ENCODE measurements at regions of chr1 and their contacts with region 1.

Region 1: DNA sequence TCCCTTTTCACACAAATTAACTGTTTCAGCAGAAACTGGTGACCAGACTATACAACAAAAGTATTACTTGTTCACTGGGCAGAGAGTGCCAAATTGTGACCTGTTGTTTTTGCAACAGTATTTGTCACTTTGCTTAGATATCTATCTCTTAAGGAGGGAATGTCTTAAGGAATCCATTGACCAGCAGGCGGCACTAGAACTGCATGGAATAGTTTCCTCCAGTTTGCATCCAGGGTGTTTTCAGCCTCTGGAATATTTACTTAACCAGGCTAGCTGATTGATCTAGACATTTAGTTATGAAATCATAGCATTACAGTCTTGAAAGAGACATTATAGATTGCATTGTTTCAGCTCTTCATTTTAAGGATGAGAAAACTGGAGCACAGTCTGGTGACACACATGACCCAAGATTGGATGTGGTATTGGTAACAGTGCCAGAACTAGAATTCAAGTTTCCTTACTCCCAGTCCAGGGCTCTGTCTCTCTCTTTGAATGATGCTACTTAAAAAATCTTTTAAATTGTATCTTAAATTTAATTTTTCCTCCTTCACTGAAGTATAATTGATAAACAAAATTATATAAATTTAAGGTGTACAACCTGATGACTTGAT is 16.9 kb downstream of the RPTN start:
- DNase-seq: peak; percentile 45
- ATAC-seq: peak; percentile 50; the same call in 2 of the 3 replicates
- H3K4me3 ChIP-seq: no peak overlapping the region
- H3K27ac ChIP-seq: no peak overlapping the region
- H3K4me1 ChIP-seq: no peaks in the 10 kb centered on the region
- H3K27me3 ChIP-seq: no peaks in the 10 kb centered on the region
- CTCF ChIP-seq: peak; percentile 68
- EP300 ChIP-seq: no peak
- POLR2A ChIP-seq: no peak
- RAD21 ChIP-seq: no peak

Region 2: GRCh38 chr1:151867785-151868411 is 274.2 kb before region 1 on chr1:
- CTCF ChIA-PET with region 1: no interaction called
- POLR2A ChIA-PET with region 1: no interaction called
- in situ Hi-C with region 1: no loop called
- intact Hi-C with region 1: no loop called
- DNase-seq: no peak
- ATAC-seq: no peak
- H3K4me3 ChIP-seq: no peak overlapping the region
- H3K27ac ChIP-seq: no peak overlapping the region
- H3K4me1 ChIP-seq: no peaks in the 10 kb centered on the region
- H3K27me3 ChIP-seq: no peaks in the 10 kb centered on the region
- CTCF ChIP-seq: no peak
- EP300 ChIP-seq: no peak
- POLR2A ChIP-seq: no peak
- RAD21 ChIP-seq: no peak

Region 3: DNA sequence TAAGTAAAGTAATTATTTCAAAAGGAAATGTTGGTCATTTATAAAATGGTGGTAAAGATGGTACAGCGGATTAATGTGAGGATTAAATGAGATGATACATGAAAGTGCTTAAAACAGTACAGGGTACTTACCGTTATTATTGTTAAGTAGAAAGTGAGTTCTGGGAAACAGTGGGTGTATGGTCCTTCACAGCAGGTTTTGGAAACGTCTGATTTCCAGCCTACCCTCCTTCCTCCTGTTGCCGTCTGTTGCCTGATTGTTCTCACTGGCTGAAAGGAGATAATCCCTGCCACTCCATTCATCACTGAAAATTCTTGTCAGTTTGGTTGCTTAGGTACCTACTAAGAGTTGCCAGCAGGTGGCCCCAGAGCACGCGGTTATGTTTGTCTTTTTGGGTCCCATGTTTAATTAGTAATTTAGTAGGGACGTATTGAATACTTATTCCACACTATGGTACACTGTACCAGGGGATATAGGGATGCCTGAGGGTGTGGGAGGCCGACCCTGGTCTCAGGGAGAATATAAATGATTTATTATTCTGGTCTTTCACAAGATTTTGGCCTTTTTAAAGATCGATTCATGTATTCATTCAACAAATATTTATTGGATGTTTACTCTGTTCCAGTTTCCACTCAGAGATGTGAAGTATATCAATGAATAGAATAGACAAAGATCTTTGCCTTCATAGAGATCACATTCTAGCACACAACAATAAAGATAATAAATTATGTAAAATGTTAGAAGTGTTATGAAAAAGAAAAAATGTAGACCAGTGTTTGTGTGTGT is 47.8 kb after region 1 on chr1:
- CTCF ChIA-PET with region 1: interaction called, 48 read pairs
- POLR2A ChIA-PET with region 1: no interaction called
- in situ Hi-C with region 1: loop called (anchors 5 kb)
- intact Hi-C with region 1: loop called (anchors 1 kb)
- DNase-seq: peak; percentile 31
- ATAC-seq: peak; percentile 68
- H3K4me3 ChIP-seq: no peak overlapping the region
- H3K27ac ChIP-seq: no peak overlapping the region
- H3K4me1 ChIP-seq: no peaks in the 10 kb centered on the region
- H3K27me3 ChIP-seq: no peaks in the 10 kb centered on the region; a peak in 1 of 5 replicates
- CTCF ChIP-seq: peak; percentile 66
- EP300 ChIP-seq: no peak
- POLR2A ChIP-seq: no peak
- RAD21 ChIP-seq: no peak

Region 4: DNA sequence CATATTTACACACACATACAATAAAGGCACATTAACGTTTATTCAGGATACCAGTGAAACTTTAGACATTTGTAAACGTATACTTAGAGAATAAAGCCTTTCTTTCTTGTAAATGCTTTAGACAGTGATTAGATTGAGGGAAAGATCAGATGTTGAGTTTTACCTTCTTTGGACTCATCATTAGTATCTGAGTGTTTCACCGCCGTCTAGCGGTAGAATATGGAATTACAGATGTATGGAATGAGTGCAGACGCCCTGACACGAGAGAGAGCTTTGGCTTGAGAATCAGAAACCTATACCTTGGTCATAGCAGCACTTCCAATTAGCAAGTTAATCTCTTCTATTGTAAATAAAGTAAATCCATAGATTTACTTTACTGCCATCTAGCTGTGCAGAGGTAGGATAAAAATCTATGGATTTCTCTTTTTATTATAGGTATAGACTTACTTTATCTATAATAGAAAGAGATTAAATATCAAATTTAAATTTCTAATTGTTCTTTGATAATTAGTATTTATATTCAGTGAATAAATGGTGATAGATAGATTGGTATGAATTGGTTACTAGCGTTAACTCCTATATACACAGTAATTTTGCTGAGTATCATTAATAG is 205.1 kb after region 1 on chr1:
- CTCF ChIA-PET with region 1: interaction called, 3 read pairs
- POLR2A ChIA-PET with region 1: no interaction called
- in situ Hi-C with region 1: no loop called
- intact Hi-C with region 1: loop called (anchors 2 kb)
- DNase-seq: peak; percentile 50
- ATAC-seq: peak; percentile 46; the same call in 2 of the 3 replicates
- H3K4me3 ChIP-seq: no peak overlapping the region
- H3K27ac ChIP-seq: no peak overlapping the region
- H3K4me1 ChIP-seq: no peaks in the 10 kb centered on the region
- H3K27me3 ChIP-seq: no peaks in the 10 kb centered on the region
- CTCF ChIP-seq: peak; percentile 70
- EP300 ChIP-seq: no peak
- POLR2A ChIP-seq: no peak
- RAD21 ChIP-seq: no peak